ENCODE measurements at regions of chr21 and their contacts with region 1.

Region 1: GRCh38 chr21:38805328-38806152 is at the start of gene ETS2:
- H3K4me3 Mint-ChIP-seq: peak within 1 kb of the TSS; percentile 90
- H3K27ac Mint-ChIP-seq: peak within 1 kb of the TSS; percentile 97
- H3K4me1 Mint-ChIP-seq: peaks cover 35% of the 10 kb centered on the region
- H3K27me3 Mint-ChIP-seq: peaks cover 27% of the 10 kb centered on the region

Region 2: DNA sequence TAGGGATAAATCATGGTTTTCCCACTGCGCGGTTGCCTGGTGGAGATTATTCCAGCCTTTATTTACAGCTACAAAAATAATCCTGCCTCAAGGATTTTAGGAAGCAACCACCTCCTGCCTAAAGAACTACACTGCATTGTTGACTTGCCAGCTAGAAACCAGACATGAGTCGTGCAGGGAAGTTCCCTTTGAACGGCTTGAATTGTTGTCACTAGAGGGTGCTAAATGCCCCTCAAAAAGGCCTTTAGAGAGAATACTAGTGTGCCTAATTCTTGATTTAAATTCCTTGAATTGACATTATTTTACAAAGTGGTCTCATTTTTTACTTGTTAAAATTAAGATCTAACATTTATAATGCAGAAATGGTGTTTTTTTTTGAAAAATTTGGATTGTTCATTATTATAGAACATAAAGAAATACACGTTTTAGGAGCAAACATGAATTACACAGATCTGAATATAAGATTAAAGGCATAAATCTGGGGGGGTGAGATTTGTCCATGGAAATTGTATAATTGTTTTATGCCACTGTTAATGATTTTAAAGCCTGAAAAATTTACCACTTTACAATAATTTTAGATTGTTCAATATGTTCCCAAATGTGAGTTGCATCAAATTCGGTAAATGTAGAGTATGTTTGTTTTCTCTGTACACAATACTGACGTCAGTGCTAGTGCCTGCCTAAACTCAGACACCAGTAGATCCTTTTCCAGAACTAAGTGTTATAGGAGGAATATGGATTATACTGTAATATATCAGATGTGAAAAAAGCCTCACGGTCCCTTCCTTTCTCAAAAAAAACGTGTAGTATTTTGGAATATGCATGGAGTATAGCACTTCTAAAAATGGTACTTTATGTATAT is 299.7 kb before region 1 on chr21:
- intact Hi-C with region 1: loop called (anchors 10 kb)
- H3K4me3 Mint-ChIP-seq: no peak overlapping the region
- H3K27ac Mint-ChIP-seq: peak overlapping the region; percentile 79
- H3K4me1 Mint-ChIP-seq: peaks cover 24% of the 10 kb centered on the region
- H3K27me3 Mint-ChIP-seq: peaks cover 2% of the 10 kb centered on the region

Region 3: DNA sequence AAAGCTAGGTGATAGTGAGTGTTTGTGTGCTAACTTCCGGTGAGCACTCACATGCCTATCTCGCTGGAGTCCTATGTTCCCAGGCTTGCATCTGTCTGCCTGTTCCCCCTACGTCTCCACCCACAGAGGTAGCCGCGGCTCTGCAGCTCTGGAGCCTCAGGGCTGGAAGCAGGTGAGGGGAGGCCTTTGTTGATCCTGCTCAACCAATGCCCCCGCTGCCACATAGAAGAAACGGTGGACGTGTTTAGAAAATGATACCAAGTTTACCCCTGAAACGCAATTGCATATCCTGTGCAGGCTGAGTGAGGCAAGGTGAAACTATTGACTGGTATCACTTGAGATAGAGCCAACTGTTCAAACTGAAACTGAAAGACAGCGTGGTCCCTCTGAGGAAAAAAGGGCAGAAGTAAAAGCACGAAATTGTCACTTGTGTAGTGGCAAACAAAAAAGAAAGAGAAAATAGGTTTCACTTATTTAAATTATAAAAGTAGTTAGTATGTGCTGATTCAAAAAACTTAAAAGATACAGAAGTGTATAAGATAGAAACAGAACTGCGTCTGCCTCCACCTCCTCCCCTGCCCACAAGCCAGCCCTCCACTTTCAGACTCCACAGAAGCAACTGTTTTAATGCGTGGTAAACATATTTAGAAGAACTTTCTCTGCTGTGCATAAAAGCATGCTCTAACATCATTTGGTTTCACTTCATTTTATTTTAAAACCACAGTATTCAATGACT is 38.4 kb before region 1 on chr21:
- intact Hi-C with region 1: loop called (anchors 1 kb)
- H3K4me3 Mint-ChIP-seq: peak overlapping the region; percentile 62
- H3K27ac Mint-ChIP-seq: peak overlapping the region; percentile 61
- H3K4me1 Mint-ChIP-seq: peaks cover 37% of the 10 kb centered on the region
- H3K27me3 Mint-ChIP-seq: peaks cover 77% of the 10 kb centered on the region

Region 4: DNA sequence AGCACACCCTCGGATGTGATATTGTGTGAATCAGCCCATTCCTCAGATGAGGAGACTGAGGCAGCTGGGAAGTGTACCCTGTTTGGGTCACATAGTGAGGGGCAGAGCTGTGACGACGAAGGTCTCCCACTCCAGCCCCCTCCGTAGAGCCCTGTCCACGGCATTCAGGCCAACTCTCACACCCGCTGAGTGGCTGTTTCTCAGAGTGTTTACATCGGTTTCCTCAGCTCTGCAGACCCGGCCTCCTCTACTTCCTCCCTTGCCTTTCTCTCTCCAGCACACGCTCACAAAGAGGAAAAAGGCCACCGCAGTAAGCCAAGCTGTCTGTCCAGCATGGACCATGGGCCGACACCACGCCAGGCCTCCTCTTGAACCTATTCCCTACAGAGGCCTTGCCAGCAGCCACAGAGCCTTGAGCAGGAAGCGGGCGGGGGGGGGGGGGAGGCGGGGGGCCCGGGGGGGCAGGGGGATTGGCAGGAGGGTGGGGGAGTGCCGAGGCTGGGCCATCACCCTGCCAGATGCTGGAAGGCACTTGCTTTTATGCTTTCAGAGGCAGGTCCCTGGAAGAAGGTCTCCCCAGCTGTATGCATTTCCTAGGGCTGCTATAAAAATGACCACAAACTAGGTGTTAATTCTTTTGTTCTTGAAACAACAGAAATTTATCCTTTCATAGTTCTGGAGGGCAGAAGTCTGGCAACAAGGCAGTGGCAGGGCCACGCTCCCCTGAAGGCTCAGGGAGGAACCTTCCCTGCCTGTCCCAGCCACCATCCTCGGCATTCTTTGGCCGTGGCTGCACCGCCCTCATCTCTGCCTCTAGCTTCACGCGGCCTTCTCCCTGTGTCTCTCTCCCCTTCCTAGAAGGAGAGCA is 199.3 kb after region 1 on chr21:
- intact Hi-C with region 1: loop called (anchors 5 kb)
- H3K4me3 Mint-ChIP-seq: peak overlapping the region; percentile 42
- H3K27ac Mint-ChIP-seq: peak overlapping the region; percentile 86
- H3K4me1 Mint-ChIP-seq: peaks cover 88% of the 10 kb centered on the region
- H3K27me3 Mint-ChIP-seq: peaks cover 18% of the 10 kb centered on the region

Region 5: GRCh38 chr21:39137248-39138178 is 332.0 kb after region 1 on chr21:
- intact Hi-C with region 1: loop called (anchors 5 kb)
- H3K4me3 Mint-ChIP-seq: no peak overlapping the region
- H3K27ac Mint-ChIP-seq: no peak overlapping the region
- H3K4me1 Mint-ChIP-seq: peaks cover 5% of the 10 kb centered on the region
- H3K27me3 Mint-ChIP-seq: peaks cover 11% of the 10 kb centered on the region

Measured in dendritic cell treated with granulocyte-macrophage colony-stimulating factor and Interleukin-4, amounts not matched to agents 40 ng/mL and 50 ng/mL, for 4 days (primary cell).